CD4-positive, alpha-beta memory T cell (primary cell): ENCODE measurements at regions of chr6 and their contacts with region 1.

Region 1: DNA sequence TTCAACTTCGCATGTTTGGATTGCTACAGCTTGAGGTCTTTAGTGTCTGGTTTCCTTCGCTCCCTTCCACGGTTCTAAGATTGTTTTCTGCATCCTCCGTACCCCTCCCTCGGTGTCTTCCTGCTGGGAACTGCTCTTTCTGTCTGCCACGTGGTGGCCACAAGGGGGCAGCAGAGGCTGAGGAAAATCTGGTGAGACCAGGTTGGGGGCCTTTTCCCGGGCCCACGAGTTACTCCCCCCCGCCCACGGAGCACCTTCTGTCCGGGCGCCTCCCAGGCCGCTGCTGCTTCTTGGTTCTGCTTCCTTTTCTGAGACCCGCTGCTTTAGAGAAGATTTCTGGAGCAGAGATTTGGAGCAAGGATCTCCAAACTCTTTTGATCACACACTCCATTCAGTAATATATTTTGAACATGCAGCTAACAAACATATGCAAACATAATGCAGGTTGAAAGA is 21.1 kb upstream of the NOTCH4 start:
- DNase-seq: peak; percentile 52 to 66 (median 58)
- H3K4me3 ChIP-seq: no peak overlapping the region
- H3K4me3 Mint-ChIP-seq: peak overlapping the region in 7 of 8 donors; percentile 4 to 88 (median 62)
- H3K27ac ChIP-seq: no peak overlapping the region
- H3K27ac Mint-ChIP-seq: peak overlapping the region in 4 of 7 donors; percentile 43 to 79 (median 46)
- H3K4me1 ChIP-seq: peaks cover 9% of the 10 kb centered on the region
- H3K4me1 Mint-ChIP-seq: peaks cover 0 to 11% (median 7%) of the 10 kb centered on the region in 4 donors
- H3K27me3 ChIP-seq: no peaks in the 10 kb centered on the region
- H3K27me3 Mint-ChIP-seq: no peaks in the 10 kb centered on the region

Region 2: DNA sequence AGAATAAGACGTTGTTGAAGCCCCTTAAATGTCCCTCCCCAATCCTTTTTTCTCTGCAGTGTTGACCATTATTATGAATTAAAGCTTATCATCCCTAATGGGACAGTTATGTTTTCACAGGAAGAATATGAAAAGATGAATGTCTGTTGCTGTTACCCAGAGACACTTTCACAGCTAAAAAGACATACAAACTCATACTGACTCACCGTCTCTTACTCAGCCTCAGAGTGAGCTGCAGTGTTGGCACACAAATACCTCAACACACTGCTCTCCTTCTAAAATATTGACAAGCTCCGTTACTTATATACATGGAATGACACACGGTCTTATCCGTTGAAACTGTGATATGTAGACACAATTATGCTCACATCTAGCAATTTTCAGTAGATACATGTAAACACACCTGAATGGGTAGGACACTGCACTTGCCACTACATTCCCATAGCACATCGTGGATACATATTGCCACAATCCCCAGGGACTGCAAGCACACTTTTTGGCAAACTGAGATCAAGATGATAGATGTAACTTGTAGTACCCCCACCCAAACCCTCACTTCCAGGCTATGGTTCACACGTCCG is 492.1 kb before region 1 on chr6:
- CTCF ChIA-PET with region 1: no interaction called
- POLR2A ChIA-PET with region 1: no interaction called
- intact Hi-C with region 1: no loop called
- DNase-seq: no peak
- H3K4me3 ChIP-seq: no peak overlapping the region
- H3K4me3 Mint-ChIP-seq: no peak overlapping the region
- H3K27ac ChIP-seq: no peak overlapping the region
- H3K27ac Mint-ChIP-seq: no peak overlapping the region
- H3K4me1 ChIP-seq: no peaks in the 10 kb centered on the region
- H3K4me1 Mint-ChIP-seq: peaks cover 0 to 4% (median 2%) of the 10 kb centered on the region in 4 donors
- H3K27me3 ChIP-seq: no peaks in the 10 kb centered on the region
- H3K27me3 Mint-ChIP-seq: no peaks in the 10 kb centered on the region

Region 3: GRCh38 chr6:32118782-32119628 is 126.0 kb before region 1 on chr6:
- CTCF ChIA-PET with region 1: interaction called, 11 read pairs
- POLR2A ChIA-PET with region 1: no interaction called
- intact Hi-C with region 1: loop called (anchors 2 kb)
- DNase-seq: peak in 4 of 5 donors; percentile 59 to 65 (median 63)
- H3K4me3 ChIP-seq: no peak overlapping the region
- H3K4me3 Mint-ChIP-seq: no peak overlapping the region
- H3K27ac ChIP-seq: no peak overlapping the region
- H3K27ac Mint-ChIP-seq: peak overlapping the region in 6 of 7 donors; percentile 47 to 90 (median 72)
- H3K4me1 ChIP-seq: peaks cover 8% of the 10 kb centered on the region
- H3K4me1 Mint-ChIP-seq: peaks cover 3 to 19% (median 11%) of the 10 kb centered on the region in 4 donors
- H3K27me3 ChIP-seq: no peaks in the 10 kb centered on the region
- H3K27me3 Mint-ChIP-seq: no peaks in the 10 kb centered on the region

Region 4: DNA sequence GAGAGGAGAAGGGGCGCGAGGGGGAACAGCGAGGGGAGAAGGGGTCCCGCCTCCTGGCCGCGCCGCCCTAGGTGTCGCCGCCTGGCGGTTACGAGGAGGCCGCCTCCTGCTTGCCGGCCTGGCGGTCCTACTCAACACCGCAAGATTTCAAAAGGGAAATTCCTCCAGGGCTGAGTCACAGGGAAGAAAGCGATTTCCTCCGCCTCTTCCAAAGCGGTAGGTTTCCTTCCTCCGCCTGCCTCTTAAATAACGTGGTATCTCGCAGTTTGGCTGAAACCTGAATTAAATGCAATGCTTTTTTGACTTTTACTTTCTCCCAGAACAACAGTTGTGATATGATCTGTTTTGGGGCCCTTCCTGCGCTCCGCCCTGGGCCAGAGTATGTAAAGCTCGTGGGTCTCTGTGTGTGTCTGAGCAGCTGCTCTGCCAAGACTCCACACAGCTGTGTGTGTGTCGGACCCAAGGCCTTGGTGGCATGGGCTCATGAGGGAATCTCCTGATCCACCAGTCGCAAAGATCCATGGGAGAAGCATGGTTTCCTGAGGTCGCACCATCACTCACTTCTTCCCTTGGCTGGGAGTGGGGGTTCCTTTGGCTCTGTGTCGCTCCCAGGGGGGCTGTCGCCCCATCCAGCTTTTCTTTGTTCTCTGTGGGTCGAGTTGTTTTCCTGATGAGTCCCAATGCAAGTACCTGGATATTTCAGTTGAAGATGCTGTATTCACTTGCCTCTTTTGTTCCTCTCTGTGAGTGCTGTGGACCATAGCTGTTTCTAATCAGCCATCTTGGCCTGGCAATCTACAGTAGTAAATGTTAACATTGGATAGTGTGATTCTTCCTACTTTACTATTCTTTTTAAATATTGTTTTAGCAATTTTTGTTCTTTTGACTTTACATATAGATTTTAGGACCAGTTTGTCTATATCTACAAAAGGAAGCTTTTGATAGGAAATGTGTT is 10.5 kb after region 1 on chr6:
- CTCF ChIA-PET with region 1: interaction called, 25 read pairs
- POLR2A ChIA-PET with region 1: no interaction called
- intact Hi-C with region 1: no loop called
- DNase-seq: peak; percentile 34 to 68 (median 40)
- H3K4me3 ChIP-seq: peak overlapping the region in 1 of 2 donors; percentile 40
- H3K4me3 Mint-ChIP-seq: peak overlapping the region; percentile 67 to 83 (median 74)
- H3K27ac ChIP-seq: no peak overlapping the region
- H3K27ac Mint-ChIP-seq: peak overlapping the region in 4 of 7 donors; percentile 44 to 82 (median 60)
- H3K4me1 ChIP-seq: peaks cover 15% of the 10 kb centered on the region
- H3K4me1 Mint-ChIP-seq: peaks cover 14 to 26% (median 18%) of the 10 kb centered on the region in 4 donors
- H3K27me3 ChIP-seq: no peaks in the 10 kb centered on the region
- H3K27me3 Mint-ChIP-seq: no peaks in the 10 kb centered on the region

Region 5: GRCh38 chr6:32288426-32288825 is 43.5 kb after region 1 on chr6:
- CTCF ChIA-PET with region 1: no interaction called
- POLR2A ChIA-PET with region 1: no interaction called
- intact Hi-C with region 1: no loop called
- DNase-seq: no peak
- H3K4me3 ChIP-seq: no peak overlapping the region
- H3K4me3 Mint-ChIP-seq: no peak overlapping the region
- H3K27ac ChIP-seq: no peak overlapping the region
- H3K27ac Mint-ChIP-seq: no peak overlapping the region
- H3K4me1 ChIP-seq: no peaks in the 10 kb centered on the region
- H3K4me1 Mint-ChIP-seq: peaks cover 0 to 1% (median 0%) of the 10 kb centered on the region in 4 donors
- H3K27me3 ChIP-seq: no peaks in the 10 kb centered on the region
- H3K27me3 Mint-ChIP-seq: peaks cover 21 to 27% of the 10 kb centered on the region in 2 donors

Region 6: GRCh38 chr6:32313964-32314363 is 69.0 kb after region 1 on chr6:
- CTCF ChIA-PET with region 1: no interaction called
- POLR2A ChIA-PET with region 1: no interaction called
- intact Hi-C with region 1: no loop called
- DNase-seq: no peak
- H3K4me3 ChIP-seq: no peak overlapping the region
- H3K4me3 Mint-ChIP-seq: no peak overlapping the region
- H3K27ac ChIP-seq: no peak overlapping the region
- H3K27ac Mint-ChIP-seq: no peak overlapping the region
- H3K4me1 ChIP-seq: no peaks in the 10 kb centered on the region
- H3K4me1 Mint-ChIP-seq: no peaks in the 10 kb centered on the region
- H3K27me3 ChIP-seq: no peaks in the 10 kb centered on the region
- H3K27me3 Mint-ChIP-seq: peaks cover 18 to 20% of the 10 kb centered on the region in 2 donors